ENCODE measurements at regions of chr12 and their contacts with region 1.

Region 1: GRCh38 chr12:109775172-109775881 is 57.9 kb downstream of the TRPV4 start:
- DNase-seq: peak; percentile 78
- H3K27ac ChIP-seq: no peak overlapping the region
- CTCF ChIP-seq: peak; percentile 81

Region 2: GRCh38 chr12:109597795-109598427 is 177.4 kb before region 1 on chr12:
- CTCF ChIA-PET with region 1: interaction called, 22 read pairs
- POLR2A ChIA-PET with region 1: no interaction called
- DNase-seq: peak; percentile 86
- H3K27ac ChIP-seq: peak overlapping the region; percentile 52
- CTCF ChIP-seq: peak; percentile 95

Measured in RWPE1 (cell line).